Activated naive CD4-positive, alpha-beta T cell treated with anti-CD3 and anti-CD28 coated beads for 36 hours (primary cell): ENCODE measurements at regions of chr5 and their contacts with region 1.

Region 1: GRCh38 chr5:157731272-157732129 is at the start of gene THG1L:
- DNase-seq: peak; percentile 100
- H3K4me3 Mint-ChIP-seq: peak within 1 kb of the TSS; percentile 97
- H3K27ac Mint-ChIP-seq: peak within 1 kb of the TSS; percentile 95
- H3K4me1 Mint-ChIP-seq: peaks cover 25% of the 10 kb centered on the region
- H3K27me3 Mint-ChIP-seq: no peaks in the 10 kb centered on the region
- total RNA-seq, gene THG1L: 28.1 to 30.2 TPM

Region 2: DNA sequence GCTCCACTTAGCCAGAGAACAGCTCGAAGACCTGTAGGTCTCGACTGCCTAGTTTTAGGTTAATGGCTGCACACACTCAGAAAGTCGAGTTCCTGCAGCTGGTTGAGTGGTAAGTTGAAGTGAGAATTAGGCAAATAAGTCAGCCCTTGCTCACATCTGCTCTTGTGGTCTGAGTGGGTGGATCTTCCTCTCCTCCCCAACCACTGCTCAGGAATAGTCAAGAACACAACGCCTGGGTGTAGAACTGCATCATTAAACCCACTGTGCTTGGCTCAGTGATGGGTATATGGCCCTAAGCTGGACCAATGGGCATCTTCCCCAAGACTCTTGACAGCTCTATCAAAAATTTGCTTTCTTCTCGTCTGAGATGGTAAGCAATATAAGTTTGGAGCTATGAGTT is 135.0 kb before region 1 on chr5:
- CTCF ChIA-PET with region 1: no interaction called
- intact Hi-C with region 1: loop called (anchors 1 kb)
- DNase-seq: peak; percentile 84
- H3K4me3 Mint-ChIP-seq: peak overlapping the region; percentile 13
- H3K27ac Mint-ChIP-seq: peak overlapping the region; percentile 92
- H3K4me1 Mint-ChIP-seq: peaks cover 96% of the 10 kb centered on the region
- H3K27me3 Mint-ChIP-seq: no peaks in the 10 kb centered on the region